B cell (primary cell): ENCODE measurements at regions of chr5 and their contacts with region 1.

Region 1: DNA sequence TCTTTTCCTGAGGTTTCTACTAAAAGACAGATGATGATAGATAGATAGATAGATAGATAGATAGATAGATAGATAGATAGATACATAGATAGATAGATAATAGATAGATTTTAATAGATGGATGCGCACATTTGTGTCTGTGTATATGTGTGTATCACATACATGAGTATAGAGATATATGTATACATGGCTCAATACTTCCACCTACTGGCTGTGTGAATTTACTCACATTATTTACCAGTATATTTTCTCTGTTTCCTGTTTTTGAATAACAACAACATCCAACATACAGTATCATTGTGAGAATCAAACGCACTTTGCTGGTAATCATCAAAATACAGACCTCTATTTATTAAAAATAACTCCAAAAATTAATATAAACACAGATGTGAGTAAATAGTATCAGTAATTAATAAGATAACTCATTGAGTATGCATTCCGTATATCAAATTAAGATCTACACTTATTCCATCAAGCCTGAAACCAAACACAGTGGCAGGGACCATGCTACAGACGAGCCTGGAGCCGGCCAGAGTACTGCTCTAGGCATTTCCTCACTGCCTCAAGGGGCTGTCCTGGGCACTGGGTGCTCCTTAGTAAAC is 338.0 kb downstream of the SEMA5A start:
- DNase-seq: peak; percentile 32
- ATAC-seq: no peak
- H3K4me3 ChIP-seq: no peak overlapping the region
- H3K4me3 Mint-ChIP-seq: no peak overlapping the region
- H3K27ac ChIP-seq: no peak overlapping the region
- H3K27ac Mint-ChIP-seq: no peak overlapping the region
- H3K4me1 ChIP-seq: no peaks in the 10 kb centered on the region
- H3K4me1 Mint-ChIP-seq: no peaks in the 10 kb centered on the region
- H3K27me3 ChIP-seq: no peaks in the 10 kb centered on the region
- H3K27me3 Mint-ChIP-seq: no peaks in the 10 kb centered on the region
- CTCF ChIP-seq: peak; percentile 40

Region 2: DNA sequence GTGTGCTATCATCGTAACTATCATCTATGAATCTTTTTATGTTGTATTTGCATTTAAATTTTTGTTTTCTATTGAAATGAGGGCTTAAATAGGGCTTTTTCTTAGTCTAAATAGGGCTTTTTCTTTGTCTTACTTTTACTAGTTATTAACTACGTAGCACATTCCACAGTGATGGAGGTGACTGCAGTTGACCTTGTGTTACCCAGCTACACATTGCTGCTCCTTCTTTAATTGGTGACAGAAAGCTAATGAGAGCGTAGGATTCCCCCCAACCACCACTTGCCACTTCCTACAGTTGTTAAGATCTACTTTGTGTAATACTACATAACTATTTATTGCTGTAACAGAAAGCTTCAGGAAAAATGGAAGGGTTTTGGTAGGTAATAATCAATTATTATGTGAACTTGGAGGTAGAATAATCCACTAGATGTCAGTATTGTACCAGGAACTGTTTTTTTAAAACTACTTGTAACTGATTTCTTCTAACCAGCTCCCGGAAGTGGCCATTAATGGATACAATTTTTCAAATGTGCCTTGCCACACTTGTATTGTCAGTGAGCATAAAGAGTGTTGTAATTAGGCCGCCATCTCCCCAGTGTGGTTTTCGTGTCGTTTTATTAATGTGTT is 1321.0 kb before region 1 on chr5:
- CTCF ChIA-PET with region 1: interaction called, 10 read pairs
- POLR2A ChIA-PET with region 1: no interaction called
- intact Hi-C with region 1: loop called (anchors 5 kb)
- DNase-seq: peak; percentile 50
- ATAC-seq: no peak
- H3K4me3 ChIP-seq: no peak overlapping the region
- H3K4me3 Mint-ChIP-seq: no peak overlapping the region
- H3K27ac ChIP-seq: no peak overlapping the region
- H3K27ac Mint-ChIP-seq: no peak overlapping the region
- H3K4me1 ChIP-seq: no peaks in the 10 kb centered on the region
- H3K4me1 Mint-ChIP-seq: no peaks in the 10 kb centered on the region
- H3K27me3 ChIP-seq: no peaks in the 10 kb centered on the region
- H3K27me3 Mint-ChIP-seq: no peaks in the 10 kb centered on the region
- CTCF ChIP-seq: peak; percentile 73

Region 3: GRCh38 chr5:7927466-7928375 is 1280.2 kb before region 1 on chr5:
- CTCF ChIA-PET with region 1: interaction called, 11 read pairs
- POLR2A ChIA-PET with region 1: no interaction called
- intact Hi-C with region 1: no loop called
- DNase-seq: peak; percentile 58
- ATAC-seq: peak; percentile 62
- H3K4me3 ChIP-seq: no peak overlapping the region
- H3K4me3 Mint-ChIP-seq: no peak overlapping the region
- H3K27ac ChIP-seq: no peak overlapping the region
- H3K27ac Mint-ChIP-seq: no peak overlapping the region
- H3K4me1 ChIP-seq: no peaks in the 10 kb centered on the region
- H3K4me1 Mint-ChIP-seq: peaks cover 1% of the 10 kb centered on the region
- H3K27me3 ChIP-seq: no peaks in the 10 kb centered on the region
- H3K27me3 Mint-ChIP-seq: peaks cover 8% of the 10 kb centered on the region
- CTCF ChIP-seq: peak; percentile 81